HEK293 (cell line): ENCODE measurements at regions of chr19 and their contacts with region 1.

Region 1: GRCh38 chr19:57803594-57804325 is 11.0 kb downstream of the ZNF552 start:
- H3K4me3 ChIP-seq: peak overlapping the region; percentile 42
- H3K27ac ChIP-seq: peak overlapping the region; percentile 41; the same call in 1 of the 2 replicates
- H3K4me1 ChIP-seq: peaks cover 6% of the 10 kb centered on the region; the same call in 1 of the 2 replicates
- CTCF ChIP-seq: no peak

Region 2: GRCh38 chr19:57819475-57820148 is 15.9 kb after region 1 on chr19:
- CTCF ChIA-PET with region 1: interaction called, 3 read pairs
- POLR2A ChIA-PET with region 1: interaction called, 10 read pairs
- H3K4me3 ChIP-seq: peak overlapping the region; percentile 97
- H3K27ac ChIP-seq: peak overlapping the region; percentile 83
- H3K4me1 ChIP-seq: peaks cover 2% of the 10 kb centered on the region; the same call in 1 of the 2 replicates
- CTCF ChIP-seq: peak; percentile 76